RWPE1 (cell line): ENCODE measurements at regions of chr12 and their contacts with region 1.

Region 1: GRCh38 chr12:53321074-53321814 is at the start of gene AAAS:
- DNase-seq: peak; percentile 97
- H3K27ac ChIP-seq: peak within 1 kb of the TSS; percentile 95
- CTCF ChIP-seq: peak; percentile 98

Region 2: GRCh38 chr12:53295070-53295890 is 26.0 kb before region 1 on chr12 and contains the start of gene PFDN5:
- CTCF ChIA-PET with region 1: interaction called, 17 read pairs
- POLR2A ChIA-PET with region 1: interaction called, 6 read pairs
- DNase-seq: peak; percentile 83
- H3K27ac ChIP-seq: peak within 1 kb of the TSS; percentile 81
- CTCF ChIP-seq: no peak

Region 3: GRCh38 chr12:53508534-53509199 is 187.4 kb after region 1 on chr12:
- CTCF ChIA-PET with region 1: interaction called, 10 read pairs
- POLR2A ChIA-PET with region 1: no interaction called
- DNase-seq: peak; percentile 77
- H3K27ac ChIP-seq: peak overlapping the region; percentile 62
- CTCF ChIP-seq: peak; percentile 93

Region 4: GRCh38 chr12:53746592-53747092 is 425.4 kb after region 1 on chr12:
- CTCF ChIA-PET with region 1: no interaction called
- POLR2A ChIA-PET with region 1: no interaction called
- DNase-seq: peak; percentile 86
- H3K27ac ChIP-seq: no peak overlapping the region
- CTCF ChIP-seq: peak; percentile 100

Region 5: GRCh38 chr12:55296469-55296868 is 1975.2 kb after region 1 on chr12 and contains the start of gene OR6C6:
- CTCF ChIA-PET with region 1: no interaction called
- POLR2A ChIA-PET with region 1: no interaction called
- DNase-seq: no peak
- H3K27ac ChIP-seq: no peak within 1 kb of the TSS
- CTCF ChIP-seq: no peak